ENCODE measurements at regions of chr7 and their contacts with region 1.

Region 1: GRCh38 chr7:29639881-29640595 is 76.4 kb downstream of the PRR15 start:
- DNase-seq: no peak
- ATAC-seq: no peak
- H3K4me3 ChIP-seq: no peak overlapping the region
- H3K27ac ChIP-seq: no peak overlapping the region
- H3K4me1 ChIP-seq: peaks cover 6% of the 10 kb centered on the region
- H3K27me3 ChIP-seq: no peaks in the 10 kb centered on the region
- CTCF ChIP-seq: no peak

Region 2: GRCh38 chr7:28921822-28922221 is 718.2 kb before region 1 on chr7:
- CTCF ChIA-PET with region 1: no interaction called
- POLR2A ChIA-PET with region 1: no interaction called
- intact Hi-C with region 1: loop called (anchors 5 kb)
- DNase-seq: peak; percentile 81
- ATAC-seq: peak; percentile 89
- H3K4me3 ChIP-seq: 0 out of 2 replicates have a peak overlapping the region, but pooled peaks have one; percentile 7
- H3K27ac ChIP-seq: no peak overlapping the region
- H3K4me1 ChIP-seq: peaks cover 7% of the 10 kb centered on the region; the same call in 1 of the 2 replicates
- H3K27me3 ChIP-seq: no peaks in the 10 kb centered on the region
- CTCF ChIP-seq: peak; percentile 83

Region 3: DNA sequence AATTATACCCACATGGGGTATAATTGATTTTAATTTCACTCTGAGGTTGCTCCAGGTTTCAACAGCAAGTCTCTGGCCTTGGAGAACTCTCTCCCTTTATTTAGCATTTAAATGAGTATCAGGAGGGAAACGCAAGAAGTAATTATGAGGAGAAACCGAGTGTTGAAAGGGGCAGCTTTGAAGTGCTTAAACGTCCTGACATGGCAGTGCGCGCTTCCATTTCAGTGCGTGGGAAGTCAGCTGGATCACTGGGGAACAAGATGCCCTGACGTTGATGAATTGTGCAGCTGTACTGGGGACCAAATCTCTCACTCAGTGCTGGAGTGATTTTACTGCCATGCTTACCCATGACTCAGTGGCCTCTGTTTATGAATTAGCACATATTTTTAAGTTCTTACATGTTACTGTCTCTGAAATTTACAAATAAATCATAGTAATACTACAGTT is 182.4 kb before region 1 on chr7:
- CTCF ChIA-PET with region 1: no interaction called
- POLR2A ChIA-PET with region 1: no interaction called
- intact Hi-C with region 1: no loop called
- DNase-seq: no peak
- ATAC-seq: no peak
- H3K4me3 ChIP-seq: no peak overlapping the region
- H3K27ac ChIP-seq: no peak overlapping the region
- H3K4me1 ChIP-seq: no peaks in the 10 kb centered on the region
- H3K27me3 ChIP-seq: no peaks in the 10 kb centered on the region
- CTCF ChIP-seq: no peak

Region 4: DNA sequence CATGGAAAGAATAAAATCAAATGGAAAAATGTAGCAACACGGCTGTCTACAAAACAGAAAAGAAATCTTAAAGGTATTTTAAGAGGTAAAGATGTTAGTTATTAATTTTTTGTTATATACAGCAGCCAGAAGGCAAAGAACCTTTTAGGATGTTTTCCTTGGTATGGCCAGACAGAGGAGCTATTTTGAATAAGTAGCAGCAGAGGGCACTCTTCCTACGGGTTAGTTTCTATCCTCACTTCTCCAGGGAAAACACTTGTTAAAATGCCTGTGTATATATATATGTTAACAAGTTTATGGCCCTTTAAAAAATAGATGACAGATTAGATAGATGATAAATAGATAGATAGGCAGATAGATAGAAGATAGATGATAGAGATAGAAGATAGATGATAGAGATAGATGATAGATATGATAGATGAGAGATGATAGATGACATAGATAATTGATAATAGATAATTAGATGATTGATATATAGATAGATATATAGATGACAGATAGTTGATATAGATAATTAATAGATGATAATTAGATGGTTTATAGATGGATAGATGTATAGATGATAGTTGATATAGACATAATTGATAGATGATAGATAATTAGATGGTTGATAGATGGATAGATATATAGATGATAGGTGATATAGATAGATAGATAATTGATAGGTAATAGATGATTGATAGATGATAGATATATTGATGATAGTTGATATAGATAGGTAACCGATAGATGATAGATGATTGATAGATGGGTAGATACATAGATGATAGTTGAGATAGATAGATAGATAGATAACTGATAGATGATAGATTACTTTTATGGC is 108.5 kb after region 1 on chr7:
- CTCF ChIA-PET with region 1: interaction called, 5 read pairs
- POLR2A ChIA-PET with region 1: no interaction called
- intact Hi-C with region 1: loop called (anchors 1 kb)
- DNase-seq: peak; percentile 73
- ATAC-seq: peak; percentile 66
- H3K4me3 ChIP-seq: 0 out of 2 replicates have a peak overlapping the region, but pooled peaks have one; percentile 27
- H3K27ac ChIP-seq: peak overlapping the region; percentile 37; the same call in 1 of the 2 replicates
- H3K4me1 ChIP-seq: peaks cover 9% of the 10 kb centered on the region
- H3K27me3 ChIP-seq: no peaks in the 10 kb centered on the region
- CTCF ChIP-seq: peak; percentile 73

Region 5: DNA sequence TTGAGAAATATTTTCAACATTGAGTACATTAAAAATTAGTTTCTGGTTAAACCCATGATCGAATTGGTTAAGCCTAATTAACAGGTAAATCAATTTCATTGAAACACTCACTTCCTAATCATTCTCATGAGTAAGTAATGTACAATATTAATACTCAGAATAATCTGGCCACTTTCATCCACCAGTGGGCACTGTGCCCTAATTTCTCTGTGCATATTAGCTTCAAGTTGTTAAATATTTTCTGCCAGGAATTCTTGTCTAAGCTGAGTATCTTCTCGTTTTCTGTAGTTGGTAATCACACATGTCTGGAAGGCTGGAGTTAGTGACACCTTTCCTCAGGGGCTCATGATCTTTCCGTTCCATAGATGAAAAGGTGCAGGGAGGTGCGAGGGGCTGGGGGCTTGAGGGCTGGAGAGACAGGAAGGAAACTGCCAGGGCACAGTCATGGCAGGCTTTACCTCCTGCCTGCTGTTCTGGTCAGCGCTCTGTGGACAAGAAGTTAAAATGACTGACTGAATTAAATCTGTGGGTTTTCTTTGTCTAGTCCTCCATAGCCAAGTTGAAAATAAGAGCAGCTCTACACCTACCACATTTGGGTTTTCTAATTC is 238.1 kb after region 1 on chr7:
- CTCF ChIA-PET with region 1: no interaction called
- POLR2A ChIA-PET with region 1: no interaction called
- intact Hi-C with region 1: loop called (anchors 10 kb)
- DNase-seq: peak; percentile 76
- ATAC-seq: peak; percentile 74
- H3K4me3 ChIP-seq: no peak overlapping the region
- H3K27ac ChIP-seq: no peak overlapping the region
- H3K4me1 ChIP-seq: peaks cover under 1% of the 10 kb centered on the region
- H3K27me3 ChIP-seq: no peaks in the 10 kb centered on the region
- CTCF ChIP-seq: peak; percentile 83

Region 6: DNA sequence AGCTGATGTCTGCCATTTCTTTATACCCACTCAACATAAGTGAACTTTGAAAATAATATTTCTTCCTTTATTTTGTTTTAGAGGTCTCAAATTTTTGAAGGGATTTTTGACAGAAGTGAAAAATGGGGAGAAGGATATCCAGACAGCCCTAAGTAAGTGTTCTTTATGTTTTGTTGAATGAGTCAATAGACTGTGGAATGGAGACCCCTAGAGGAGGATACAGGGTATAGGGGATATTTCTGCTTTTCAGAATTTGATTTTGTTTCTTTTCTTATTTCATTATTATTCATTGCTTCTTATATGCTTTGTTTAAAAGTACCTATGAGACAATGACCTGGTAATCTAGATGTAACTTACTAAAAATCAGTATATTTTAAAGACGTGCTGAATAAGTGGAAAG is 422.6 kb after region 1 on chr7:
- CTCF ChIA-PET with region 1: no interaction called
- POLR2A ChIA-PET with region 1: no interaction called
- intact Hi-C with region 1: loop called (anchors 5 kb)
- DNase-seq: peak; percentile 42
- ATAC-seq: peak; percentile 63
- H3K4me3 ChIP-seq: no peak overlapping the region
- H3K27ac ChIP-seq: no peak overlapping the region
- H3K4me1 ChIP-seq: no peaks in the 10 kb centered on the region
- H3K27me3 ChIP-seq: no peaks in the 10 kb centered on the region
- CTCF ChIP-seq: peak; percentile 81

Measured in PC-3 (cell line).